Naive thymus-derived CD4-positive, alpha-beta T cell (primary cell): ENCODE measurements at regions of chr14 and their contacts with region 1.

Region 1: DNA sequence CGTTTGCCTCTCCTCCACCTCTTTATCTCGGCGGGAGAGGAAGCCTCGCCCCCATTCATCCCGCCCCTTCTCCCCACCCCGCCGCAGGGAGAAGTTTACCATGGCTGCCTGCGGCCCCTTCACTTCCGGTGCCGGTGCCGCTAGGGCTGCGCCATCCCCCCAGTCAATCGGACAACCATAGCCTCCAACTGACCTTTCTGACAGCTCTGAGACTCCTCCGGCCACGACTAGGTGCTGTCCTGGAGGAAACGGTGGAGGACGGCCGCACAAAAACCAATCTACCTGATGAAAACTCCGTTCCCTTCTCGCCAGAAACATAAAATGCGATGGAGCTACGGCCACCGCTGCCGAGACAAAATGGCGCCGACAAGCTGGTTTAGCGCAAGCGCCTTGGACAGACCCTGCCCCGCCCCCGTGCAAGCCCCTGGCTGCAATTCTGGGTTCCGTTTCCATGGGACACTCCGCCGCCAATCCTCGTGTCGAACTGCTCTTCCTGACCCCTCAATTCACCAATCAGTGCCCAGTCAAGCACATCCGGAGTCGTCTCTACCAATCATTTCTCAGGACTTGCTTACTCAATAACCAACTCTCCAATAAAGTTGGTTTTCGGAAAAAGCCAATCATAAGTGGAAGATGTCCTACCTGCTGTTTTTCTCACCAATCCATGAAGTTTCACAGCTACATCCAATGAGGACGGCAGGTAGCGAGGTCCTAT is 436 bp upstream of the ARID4A start:
- DNase-seq: peak; percentile 90 to 100 (median 99)
- ATAC-seq: peak; percentile 91
- H3K4me3 ChIP-seq: peak overlapping the region; percentile 91
- H3K4me3 Mint-ChIP-seq: no peak overlapping the region
- H3K27ac ChIP-seq: peak overlapping the region; percentile 94
- H3K27ac Mint-ChIP-seq: no peak overlapping the region
- H3K4me1 ChIP-seq: peaks cover 17 to 23% of the 10 kb centered on the region in 2 donors
- H3K4me1 Mint-ChIP-seq: peaks cover 36 to 64% (median 55%) of the 10 kb centered on the region in 7 donors
- H3K27me3 ChIP-seq: no peaks in the 10 kb centered on the region
- H3K27me3 Mint-ChIP-seq: no peaks in the 10 kb centered on the region

Region 2: DNA sequence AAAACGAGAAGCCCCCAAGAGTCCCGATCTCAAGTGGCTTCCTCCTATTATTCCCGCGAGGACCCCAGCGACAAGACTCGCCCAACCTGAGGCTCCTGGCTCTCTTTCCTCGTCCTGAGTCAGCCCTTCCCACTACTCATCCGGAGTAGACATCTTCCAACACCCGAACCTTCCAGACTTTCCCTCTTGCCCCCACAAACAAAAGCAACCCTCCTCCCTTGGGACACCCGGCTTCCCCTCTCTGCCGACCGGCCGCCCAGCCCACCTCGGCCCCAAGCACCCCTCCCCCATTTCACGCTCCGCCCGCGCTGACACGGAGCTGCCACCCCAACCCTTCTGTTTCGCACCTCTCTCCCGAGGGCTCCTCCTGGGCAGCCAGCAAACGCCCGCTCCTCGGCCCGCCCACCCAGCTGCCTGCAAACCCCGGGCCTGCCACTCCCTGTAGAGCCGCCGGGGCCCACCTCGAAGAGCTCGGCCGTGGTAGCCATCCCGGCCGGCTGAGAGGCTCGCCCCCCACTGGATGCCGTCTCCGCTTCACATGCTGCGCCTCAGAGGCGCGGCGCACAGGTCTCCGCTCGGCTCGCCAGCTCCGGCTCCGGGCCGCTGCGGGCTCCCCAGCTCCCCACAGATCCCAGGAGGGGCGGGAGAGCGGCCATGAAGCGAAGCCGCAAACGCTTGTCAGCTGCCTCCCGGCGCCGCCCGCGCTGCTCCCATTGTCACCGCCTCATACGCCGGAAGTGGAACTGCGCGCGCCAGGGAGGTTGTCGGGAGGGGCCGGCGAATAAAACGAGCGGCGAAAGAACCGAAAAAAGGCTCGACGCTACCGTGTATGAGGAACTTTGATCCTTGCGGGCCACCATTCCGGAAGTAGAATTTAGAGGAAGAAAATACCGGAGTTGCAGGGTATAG is 1029.5 kb before region 1 on chr14 and contains the starts of genes AP5M1 and EXOC5:
- CTCF ChIA-PET with region 1: no interaction called
- POLR2A ChIA-PET with region 1: no interaction called
- intact Hi-C with region 1: loop called in 1 of 2 experiments (anchors 2 kb)
- DNase-seq: peak; percentile 78 to 95 (median 93)
- ATAC-seq: peak; percentile 89
- H3K4me3 ChIP-seq: peak within 1 kb of the TSS; percentile 89
- H3K4me3 Mint-ChIP-seq: peak within 1 kb of the TSS; percentile 97 to 100 (median 99)
- H3K27ac ChIP-seq: peak within 1 kb of the TSS; percentile 91
- H3K27ac Mint-ChIP-seq: peak within 1 kb of the TSS; percentile 98 to 100 (median 99)
- H3K4me1 ChIP-seq: peaks cover 29 to 34% of the 10 kb centered on the region in 2 donors
- H3K4me1 Mint-ChIP-seq: peaks cover 41 to 93% (median 76%) of the 10 kb centered on the region in 7 donors
- H3K27me3 ChIP-seq: no peaks in the 10 kb centered on the region
- H3K27me3 Mint-ChIP-seq: no peaks in the 10 kb centered on the region
- total RNA-seq, gene AP5M1: 42.3 to 62.8 (median 52.1) TPM
- total RNA-seq, gene EXOC5: 27.3 to 71.6 (median 42.2) TPM

Region 3: GRCh38 chr14:58239244-58240195 is 58.4 kb before region 1 on chr14:
- CTCF ChIA-PET with region 1: no interaction called
- POLR2A ChIA-PET with region 1: interaction called, 63 read pairs
- intact Hi-C with region 1: loop called (anchors 1 kb)
- DNase-seq: peak; percentile 66 to 89 (median 84)
- ATAC-seq: peak; percentile 39
- H3K4me3 ChIP-seq: peak overlapping the region; percentile 78
- H3K4me3 Mint-ChIP-seq: no peak overlapping the region
- H3K27ac ChIP-seq: peak overlapping the region; percentile 75
- H3K27ac Mint-ChIP-seq: no peak overlapping the region
- H3K4me1 ChIP-seq: peaks cover 8 to 9% of the 10 kb centered on the region in 2 donors
- H3K4me1 Mint-ChIP-seq: peaks cover 11 to 30% (median 27%) of the 10 kb centered on the region in 7 donors
- H3K27me3 ChIP-seq: no peaks in the 10 kb centered on the region
- H3K27me3 Mint-ChIP-seq: peaks cover 0 to 2% (median 0%) of the 10 kb centered on the region in 5 donors

Region 4: DNA sequence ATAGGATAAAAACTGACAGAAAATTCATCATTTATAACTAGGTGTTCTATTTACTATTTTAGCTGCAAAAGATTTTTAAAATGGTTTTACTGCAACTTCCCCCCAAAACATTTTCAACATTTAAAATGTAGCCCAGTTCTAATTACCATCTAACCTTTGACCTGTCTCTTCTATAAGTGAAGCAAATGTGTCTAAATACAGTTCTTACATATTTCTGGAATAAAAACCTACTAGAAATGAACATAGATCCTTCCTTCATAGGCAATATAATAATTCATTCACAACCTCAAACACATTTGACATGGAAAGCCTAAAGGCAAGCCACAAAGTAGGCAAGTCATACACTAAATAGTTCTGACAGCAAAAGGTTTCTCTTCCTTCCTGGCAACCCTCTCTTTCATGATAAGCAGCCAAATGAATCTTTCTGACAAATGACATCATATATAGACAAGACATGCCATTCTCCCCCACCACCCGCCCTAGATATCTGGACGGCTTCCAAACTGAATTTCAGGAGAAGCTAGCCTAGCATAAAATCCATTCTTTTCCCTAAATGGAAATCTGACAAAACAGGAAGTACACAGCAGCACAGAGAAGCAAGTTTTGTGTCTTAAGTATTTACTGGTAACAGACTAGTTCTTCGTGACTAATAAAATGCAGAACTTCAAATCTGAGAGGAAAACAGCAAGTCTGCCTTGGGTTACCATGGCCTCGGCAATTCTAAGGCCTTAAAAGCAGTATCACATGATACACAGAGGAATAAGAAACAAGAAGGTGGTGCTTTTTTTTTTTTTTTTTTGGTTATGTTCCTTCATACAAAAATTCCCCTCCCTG is 16.7 kb before region 1 on chr14:
- CTCF ChIA-PET with region 1: interaction called, 5 read pairs
- POLR2A ChIA-PET with region 1: interaction called, 24 read pairs
- intact Hi-C with region 1: loop called (anchors 1 kb)
- DNase-seq: peak in 8 of 9 donors; percentile 30 to 67 (median 50)
- ATAC-seq: peak; percentile 88
- H3K4me3 ChIP-seq: no peak overlapping the region
- H3K4me3 Mint-ChIP-seq: peak overlapping the region; percentile 27 to 79 (median 71)
- H3K27ac ChIP-seq: peak overlapping the region; percentile 72
- H3K27ac Mint-ChIP-seq: peak overlapping the region; percentile 83 to 97 (median 93)
- H3K4me1 ChIP-seq: peaks cover 13 to 45% of the 10 kb centered on the region in 2 donors
- H3K4me1 Mint-ChIP-seq: peaks cover 50 to 89% (median 79%) of the 10 kb centered on the region in 7 donors
- H3K27me3 ChIP-seq: no peaks in the 10 kb centered on the region
- H3K27me3 Mint-ChIP-seq: no peaks in the 10 kb centered on the region

Region 5: DNA sequence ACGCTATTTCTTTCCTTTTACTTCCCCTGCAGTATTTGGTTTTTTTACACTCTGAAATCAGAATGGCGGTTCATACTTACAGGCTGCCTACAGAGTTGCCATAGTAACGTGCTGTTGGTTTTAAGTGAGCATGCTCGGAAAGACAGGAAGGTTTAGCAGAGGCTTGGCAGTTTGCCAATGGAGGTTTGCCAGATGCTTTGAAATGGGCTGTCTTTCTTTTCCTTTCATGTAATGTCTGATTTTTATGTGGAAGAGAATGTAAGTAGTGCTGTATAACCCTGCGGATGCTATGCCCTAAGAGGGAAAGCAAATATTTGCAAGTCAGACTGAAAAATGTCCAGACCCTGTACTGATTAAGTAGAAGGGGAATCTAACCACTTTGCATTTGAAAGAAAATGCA is 33.2 kb after region 1 on chr14:
- CTCF ChIA-PET with region 1: no interaction called
- POLR2A ChIA-PET with region 1: interaction called, 14 read pairs
- intact Hi-C with region 1: loop called (anchors 1 kb)
- DNase-seq: peak; percentile 61 to 98 (median 95)
- ATAC-seq: peak; percentile 97
- H3K4me3 ChIP-seq: peak overlapping the region; percentile 17
- H3K4me3 Mint-ChIP-seq: peak overlapping the region; percentile 38 to 85 (median 76)
- H3K27ac ChIP-seq: peak overlapping the region; percentile 72
- H3K27ac Mint-ChIP-seq: peak overlapping the region; percentile 84 to 97 (median 94)
- H3K4me1 ChIP-seq: peaks cover 5 to 9% of the 10 kb centered on the region in 2 donors
- H3K4me1 Mint-ChIP-seq: peaks cover 17 to 42% (median 32%) of the 10 kb centered on the region in 7 donors
- H3K27me3 ChIP-seq: no peaks in the 10 kb centered on the region
- H3K27me3 Mint-ChIP-seq: no peaks in the 10 kb centered on the region

Region 6: DNA sequence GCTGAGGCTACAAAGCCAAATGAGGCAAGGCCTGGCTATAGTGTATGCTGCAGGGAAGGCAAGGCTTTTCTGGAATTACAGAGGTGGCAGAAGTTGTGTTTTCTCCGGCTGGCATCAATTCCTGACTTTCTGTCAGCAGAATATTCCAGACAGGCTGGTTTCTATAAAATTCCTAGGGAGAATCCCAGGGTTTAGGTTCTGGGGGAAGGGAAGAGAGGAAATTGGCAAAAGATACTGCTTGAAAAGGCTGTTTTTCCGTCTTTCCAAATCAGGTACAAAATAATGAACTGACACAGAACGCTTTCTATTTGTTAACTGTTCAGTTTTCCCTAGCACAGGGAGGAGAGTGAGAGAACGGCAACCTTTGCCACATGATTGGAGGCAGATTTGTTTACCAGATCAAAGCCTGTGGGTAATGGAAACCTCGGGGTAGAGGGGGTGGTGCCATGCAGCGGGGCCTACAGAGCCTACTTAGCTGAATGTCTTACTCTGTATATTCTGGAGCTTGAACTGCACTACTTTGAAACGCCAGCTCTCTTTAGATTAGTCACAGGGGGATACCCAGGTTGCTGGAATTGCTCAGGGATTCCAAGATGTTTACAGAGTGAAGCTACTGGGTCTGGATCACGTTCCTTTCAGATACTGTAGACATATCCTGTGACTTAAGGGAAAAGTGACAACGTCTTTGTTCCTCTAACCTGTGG is 274.0 kb after region 1 on chr14:
- CTCF ChIA-PET with region 1: no interaction called
- POLR2A ChIA-PET with region 1: no interaction called
- intact Hi-C with region 1: loop called in 1 of 2 experiments (anchors 5 kb)
- DNase-seq: peak in 8 of 9 donors; percentile 41 to 80 (median 69)
- ATAC-seq: peak; percentile 87
- H3K4me3 ChIP-seq: no peak overlapping the region
- H3K4me3 Mint-ChIP-seq: peak overlapping the region; percentile 35 to 83 (median 70)
- H3K27ac ChIP-seq: peak overlapping the region; percentile 40
- H3K27ac Mint-ChIP-seq: peak overlapping the region; percentile 74 to 96 (median 93)
- H3K4me1 ChIP-seq: peaks cover 0 to 33% of the 10 kb centered on the region in 2 donors
- H3K4me1 Mint-ChIP-seq: peaks cover 14 to 67% (median 51%) of the 10 kb centered on the region in 7 donors
- H3K27me3 ChIP-seq: no peaks in the 10 kb centered on the region
- H3K27me3 Mint-ChIP-seq: no peaks in the 10 kb centered on the region